Ovary (tissue), 10 donors: ENCODE measurements at regions of chr17 and their contacts with region 1.

Region 1: GRCh38 chr17:48011405-48012150 is 26.0 kb downstream of the COPZ2 start:
- DNase-seq: no peak
- H3K4me3 ChIP-seq: no peak overlapping the region
- H3K27ac ChIP-seq: no peak overlapping the region
- H3K4me1 ChIP-seq: no peaks in the 10 kb centered on the region
- H3K27me3 ChIP-seq: no peaks in the 10 kb centered on the region
- CTCF ChIP-seq: no peak
- EP300 ChIP-seq: no peak
- POLR2A ChIP-seq: no peak

Region 2: GRCh38 chr17:47840740-47841603 is 170.6 kb before region 1 on chr17 and contains the start of gene SCRN2:
- intact Hi-C with region 1: loop called in 1 of 4 experiments (anchors 5 kb)
- DNase-seq: peak; percentile 85 to 95 (median 89)
- H3K4me3 ChIP-seq: peak within 1 kb of the TSS; percentile 75
- H3K27ac ChIP-seq: peak within 1 kb of the TSS; percentile 46 to 70
- H3K4me1 ChIP-seq: peaks cover 4% of the 10 kb centered on the region
- H3K27me3 ChIP-seq: no peaks in the 10 kb centered on the region
- CTCF ChIP-seq: peak; percentile 91 to 98 (median 98)
- EP300 ChIP-seq: no peak
- POLR2A ChIP-seq: no peak
- total RNA-seq, gene SCRN2: 25.4 to 43.9 (median 36.8) TPM

Region 3: GRCh38 chr17:47949136-47949759 is 62.3 kb before region 1 on chr17:
- intact Hi-C with region 1: loop called in 3 of 4 experiments (anchors 2 to 5 kb)
- DNase-seq: peak; percentile 94 to 98 (median 95)
- H3K4me3 ChIP-seq: peak overlapping the region; percentile 19
- H3K27ac ChIP-seq: peak overlapping the region in 1 of 2 donors; percentile 55
- H3K4me1 ChIP-seq: peaks cover 7% of the 10 kb centered on the region
- H3K27me3 ChIP-seq: no peaks in the 10 kb centered on the region
- CTCF ChIP-seq: peak; percentile 90 to 95 (median 95)
- EP300 ChIP-seq: no peak
- POLR2A ChIP-seq: peak; percentile 22

Region 4: DNA sequence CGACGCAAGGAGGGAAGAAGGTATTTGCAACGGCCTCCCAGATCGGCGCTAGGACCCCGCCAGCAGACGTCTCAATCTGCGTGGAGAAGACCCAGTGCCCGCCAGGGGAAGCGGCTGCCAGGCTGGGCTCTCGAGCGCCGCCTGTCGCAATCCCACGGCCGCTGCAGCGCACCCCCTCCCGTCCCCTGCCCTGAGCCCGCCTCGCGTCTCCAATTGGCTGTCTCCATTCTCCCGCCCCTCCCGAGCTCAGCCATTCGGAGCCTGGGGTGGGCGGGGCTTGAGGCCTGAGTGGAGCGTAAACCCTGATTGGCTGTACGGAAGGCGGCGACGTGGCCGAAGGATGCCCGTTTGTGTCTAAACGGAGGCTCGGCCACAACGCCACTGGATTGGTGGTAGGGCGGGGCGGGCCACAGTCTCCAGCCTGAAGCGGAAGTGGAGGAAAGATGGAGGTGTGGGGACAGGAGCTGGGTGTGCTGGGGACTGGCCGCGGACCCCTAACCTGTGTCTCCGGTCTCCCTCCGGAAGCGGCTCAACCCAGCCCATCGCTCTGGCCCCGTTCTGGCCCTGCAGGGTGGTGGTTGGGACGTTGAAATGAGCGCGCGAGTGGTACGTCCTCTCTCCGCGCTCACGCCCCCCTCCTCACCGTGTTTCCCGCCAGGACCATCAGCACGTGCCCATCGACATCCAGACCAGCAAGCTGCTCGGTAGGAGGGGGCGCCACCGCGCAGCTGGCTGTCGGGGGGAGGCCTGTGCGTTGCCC is 40.7 kb before region 1 on chr17 and contains the start of gene CDK5RAP3:
- intact Hi-C with region 1: loop called in 2 of 4 experiments (anchors 5 to 10 kb)
- DNase-seq: peak; percentile 99 to 100 (median 100)
- H3K4me3 ChIP-seq: peak within 1 kb of the TSS; percentile 94
- H3K27ac ChIP-seq: peak within 1 kb of the TSS; percentile 2 to 78
- H3K4me1 ChIP-seq: peaks cover 11% of the 10 kb centered on the region
- H3K27me3 ChIP-seq: no peaks in the 10 kb centered on the region
- CTCF ChIP-seq: peak; percentile 97 to 99 (median 99)
- EP300 ChIP-seq: no peak
- POLR2A ChIP-seq: peak; percentile 64
- total RNA-seq, gene CDK5RAP3: 125 to 197 (median 144) TPM

Region 5: DNA sequence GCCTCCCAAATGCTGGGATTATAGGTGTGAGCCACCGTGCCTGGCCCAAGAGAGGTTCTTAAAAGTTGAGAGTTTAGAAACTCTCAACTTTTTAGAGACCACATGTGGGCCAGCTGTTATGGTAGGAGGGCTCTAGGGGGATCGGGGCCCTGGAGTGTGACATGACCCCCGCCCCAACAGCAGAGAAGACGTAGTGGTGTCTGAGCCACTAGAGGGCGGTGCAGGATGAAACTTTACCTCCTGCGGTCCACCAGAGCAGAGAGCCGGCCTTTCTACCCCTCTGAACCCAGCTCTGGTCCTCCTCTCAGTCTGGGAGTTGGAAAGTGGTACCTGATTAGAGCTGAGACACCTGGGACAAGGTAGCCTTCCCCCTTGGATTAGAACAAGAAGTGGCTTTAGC is 33.3 kb before region 1 on chr17:
- intact Hi-C with region 1: loop called in 1 of 4 experiments (anchors 5 kb)
- DNase-seq: peak in 4 of 5 donors; percentile 31 to 61 (median 46)
- H3K4me3 ChIP-seq: no peak overlapping the region
- H3K27ac ChIP-seq: no peak overlapping the region
- H3K4me1 ChIP-seq: no peaks in the 10 kb centered on the region
- H3K27me3 ChIP-seq: no peaks in the 10 kb centered on the region
- CTCF ChIP-seq: peak in 2 of 3 donors; percentile 29 to 33
- EP300 ChIP-seq: no peak
- POLR2A ChIP-seq: no peak